Common myeloid progenitor, CD34-positive (primary cell): ENCODE measurements at regions of chr7 and their contacts with region 1.

Region 1: GRCh38 chr7:36627836-36628235 is 96.5 kb downstream of the AOAH start:
- DNase-seq: no peak
- H3K4me3 ChIP-seq: no peak overlapping the region
- H3K27ac ChIP-seq: no peak overlapping the region
- H3K4me1 ChIP-seq: peaks cover 14 to 45% (median 34%) of the 10 kb centered on the region in 4 experiments
- H3K27me3 ChIP-seq: no peaks in the 10 kb centered on the region

Region 2: GRCh38 chr7:36639826-36640225 is 12.0 kb after region 1 on chr7:
- CTCF ChIA-PET with region 1: interaction called, 11 read pairs
- POLR2A ChIA-PET with region 1: no interaction called
- DNase-seq: peak; percentile 30 to 92 (median 88)
- H3K4me3 ChIP-seq: peak overlapping the region in 3 of 7 experiments; percentile 22 to 38 (median 31)
- H3K27ac ChIP-seq: peak overlapping the region in 1 of 2 experiments; percentile 56
- H3K4me1 ChIP-seq: peaks cover 8 to 53% (median 37%) of the 10 kb centered on the region in 4 experiments
- H3K27me3 ChIP-seq: no peaks in the 10 kb centered on the region